ENCODE measurements at regions of chr15 and their contacts with region 1.

Region 1: GRCh38 chr15:57340682-57341259 is 35.5 kb upstream of the CGNL1 start:
- DNase-seq: peak; percentile 56
- H3K4me3 Mint-ChIP-seq: no peak overlapping the region
- H3K27ac Mint-ChIP-seq: no peak overlapping the region
- H3K4me1 Mint-ChIP-seq: no peaks in the 10 kb centered on the region
- H3K27me3 Mint-ChIP-seq: no peaks in the 10 kb centered on the region
- CTCF ChIP-seq: peak; percentile 94

Region 2: DNA sequence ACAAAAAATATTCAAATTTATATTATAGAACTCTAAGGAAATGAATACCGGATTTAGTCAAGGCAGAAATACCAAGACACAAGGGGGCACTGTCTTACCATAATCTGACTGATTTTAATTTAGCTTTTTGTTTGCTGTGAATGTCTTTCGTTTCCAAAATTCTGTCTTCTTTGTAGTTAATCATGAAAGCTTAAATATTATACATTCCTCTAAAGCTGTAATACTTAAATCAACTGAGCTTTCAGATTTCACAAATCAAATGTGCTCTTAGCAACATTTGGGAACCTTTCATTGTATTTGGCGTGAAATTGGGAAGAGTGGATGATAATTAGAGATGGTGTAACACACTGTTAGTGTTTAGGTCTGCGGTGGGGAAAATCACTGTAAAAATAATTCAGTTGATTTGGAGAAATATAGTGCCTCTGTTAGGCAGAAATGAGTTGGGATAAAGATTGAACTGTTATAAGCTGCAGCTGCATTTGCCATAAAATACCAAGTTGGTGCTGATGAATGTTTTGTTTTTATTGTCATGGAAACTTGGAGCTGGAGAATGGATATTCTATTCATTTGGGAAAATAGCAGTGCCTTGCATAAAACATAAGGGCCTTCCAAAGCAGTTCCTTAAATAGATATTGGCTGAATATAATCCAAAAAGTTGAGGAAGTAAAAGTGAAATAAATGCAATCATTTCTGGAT is 194.1 kb before region 1 on chr15:
- CTCF ChIA-PET with region 1: interaction called, 16 read pairs
- POLR2A ChIA-PET with region 1: no interaction called
- intact Hi-C with region 1: no loop called
- DNase-seq: peak; percentile 54
- H3K4me3 Mint-ChIP-seq: no peak overlapping the region
- H3K27ac Mint-ChIP-seq: no peak overlapping the region
- H3K4me1 Mint-ChIP-seq: peaks cover 27% of the 10 kb centered on the region
- H3K27me3 Mint-ChIP-seq: no peaks in the 10 kb centered on the region
- CTCF ChIP-seq: peak; percentile 69

Region 3: GRCh38 chr15:57356636-57357035 is 15.9 kb after region 1 on chr15:
- CTCF ChIA-PET with region 1: interaction called, 26 read pairs
- POLR2A ChIA-PET with region 1: no interaction called
- intact Hi-C with region 1: no loop called
- DNase-seq: no peak
- H3K4me3 Mint-ChIP-seq: no peak overlapping the region
- H3K27ac Mint-ChIP-seq: no peak overlapping the region
- H3K4me1 Mint-ChIP-seq: no peaks in the 10 kb centered on the region
- H3K27me3 Mint-ChIP-seq: no peaks in the 10 kb centered on the region
- CTCF ChIP-seq: no peak

Region 4: DNA sequence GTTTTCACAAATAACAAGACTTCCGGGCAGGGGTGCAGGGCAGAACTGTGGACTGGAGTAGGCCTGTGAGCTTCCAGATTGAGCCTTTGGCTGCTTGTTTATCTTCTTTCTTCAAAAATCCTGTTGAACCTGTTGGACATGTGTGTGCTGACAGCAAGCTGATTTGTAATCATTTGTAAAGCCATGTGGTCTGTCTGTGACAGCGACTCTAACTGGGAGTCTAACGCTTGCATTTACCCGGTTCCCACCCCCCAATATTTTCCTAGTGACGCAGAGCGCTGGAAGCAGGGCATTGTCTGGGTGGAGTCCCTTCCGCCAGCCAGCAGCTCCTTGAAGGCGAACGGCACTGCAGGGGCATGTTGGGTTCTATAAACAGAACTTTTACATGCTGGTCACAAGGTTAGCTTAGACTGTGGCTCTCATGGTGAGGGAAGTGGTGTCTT is 165.2 kb after region 1 on chr15:
- CTCF ChIA-PET with region 1: interaction called, 11 read pairs
- POLR2A ChIA-PET with region 1: no interaction called
- intact Hi-C with region 1: no loop called
- DNase-seq: no peak
- H3K4me3 Mint-ChIP-seq: no peak overlapping the region
- H3K27ac Mint-ChIP-seq: peak overlapping the region; percentile 64
- H3K4me1 Mint-ChIP-seq: no peaks in the 10 kb centered on the region
- H3K27me3 Mint-ChIP-seq: no peaks in the 10 kb centered on the region
- CTCF ChIP-seq: no peak

Region 5: DNA sequence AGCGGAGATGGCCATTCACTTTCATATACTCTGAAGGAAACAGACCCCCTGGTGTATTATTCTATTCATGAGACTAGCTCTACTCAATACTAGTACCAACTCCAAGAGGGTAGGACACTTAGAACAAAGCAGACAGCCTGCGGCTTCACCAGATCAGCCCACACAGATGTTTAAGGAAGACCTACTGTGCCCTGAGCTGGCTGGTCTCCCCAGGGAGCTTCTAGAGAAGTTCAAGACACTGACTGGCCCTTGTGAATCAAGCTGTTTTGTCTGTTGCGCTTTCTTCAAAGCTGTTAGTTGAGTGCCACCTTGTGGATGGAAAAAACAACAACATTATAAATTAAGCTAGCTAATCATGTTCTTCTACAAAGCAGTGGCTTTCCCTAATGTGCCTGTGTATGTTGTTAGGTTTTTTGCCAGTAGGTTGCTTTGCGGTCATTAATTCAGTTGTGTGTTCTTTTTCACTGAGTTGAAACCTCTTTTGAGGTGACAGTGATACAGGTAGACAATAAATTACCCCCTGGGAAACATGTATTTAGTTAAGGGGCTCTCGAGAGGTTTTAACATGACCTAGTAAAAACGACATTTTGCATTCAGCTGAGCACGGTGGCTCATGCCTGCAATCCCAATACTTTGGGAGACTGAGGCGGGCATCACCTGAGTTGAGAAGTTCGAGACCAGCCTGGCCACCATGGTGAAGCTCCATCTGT is 186.8 kb after region 1 on chr15:
- CTCF ChIA-PET with region 1: interaction called, 400 read pairs
- POLR2A ChIA-PET with region 1: interaction called, 38 read pairs
- intact Hi-C with region 1: loop called (anchors 1 kb)
- DNase-seq: peak; percentile 81
- H3K4me3 Mint-ChIP-seq: no peak overlapping the region
- H3K27ac Mint-ChIP-seq: no peak overlapping the region
- H3K4me1 Mint-ChIP-seq: no peaks in the 10 kb centered on the region
- H3K27me3 Mint-ChIP-seq: peaks cover 2% of the 10 kb centered on the region
- CTCF ChIP-seq: peak; percentile 63

Region 6: DNA sequence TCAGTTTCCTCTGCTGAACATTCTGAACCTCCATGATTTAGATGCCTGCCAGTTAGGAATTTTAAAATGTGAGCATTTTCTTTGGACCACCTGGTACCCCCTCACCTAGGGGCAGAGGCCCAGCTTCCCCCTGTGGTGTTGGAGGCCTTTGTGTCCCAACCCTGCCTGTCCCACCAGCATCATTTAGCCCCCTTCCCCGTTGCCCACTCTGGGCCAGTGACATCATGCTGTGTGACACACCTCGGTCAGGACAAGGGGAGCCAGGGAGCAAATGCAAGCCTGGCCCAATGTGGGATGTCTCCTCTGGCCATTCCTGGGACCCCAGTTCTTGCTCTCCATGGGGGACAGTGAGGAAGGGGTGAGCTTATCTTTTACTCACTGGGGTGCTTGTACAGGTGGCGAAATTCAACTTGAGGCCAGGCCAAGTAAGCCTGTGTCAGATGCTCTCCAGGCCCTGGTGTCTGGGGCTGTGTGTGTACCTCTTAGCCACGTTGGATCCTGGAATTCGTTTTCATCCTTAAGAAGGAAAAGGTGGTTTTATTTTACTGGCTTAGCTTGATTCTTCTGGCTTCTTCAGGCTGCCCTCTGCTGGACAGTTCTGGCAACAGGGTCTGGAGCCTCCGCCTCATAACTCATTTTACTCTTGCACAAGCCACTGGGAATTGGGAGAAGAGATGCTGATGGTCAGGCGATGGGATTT is 201.2 kb after region 1 on chr15:
- CTCF ChIA-PET with region 1: interaction called, 129 read pairs
- POLR2A ChIA-PET with region 1: interaction called, 3 read pairs
- intact Hi-C with region 1: loop called (anchors 1 kb)
- DNase-seq: peak; percentile 80
- H3K4me3 Mint-ChIP-seq: no peak overlapping the region
- H3K27ac Mint-ChIP-seq: no peak overlapping the region
- H3K4me1 Mint-ChIP-seq: no peaks in the 10 kb centered on the region
- H3K27me3 Mint-ChIP-seq: peaks cover 17% of the 10 kb centered on the region
- CTCF ChIP-seq: peak; percentile 78

Measured in MCF 10A (cell line).